MCF 10A (cell line): ENCODE measurements at regions of chr9 and their contacts with region 1.

Region 1: GRCh38 chr9:87382902-87383301 is 114.8 kb upstream of the DAPK1 start:
- DNase-seq: peak; percentile 87
- H3K4me3 Mint-ChIP-seq: peak overlapping the region; percentile 32
- H3K27ac Mint-ChIP-seq: peak overlapping the region; percentile 92
- H3K4me1 Mint-ChIP-seq: peaks cover 58% of the 10 kb centered on the region
- H3K27me3 Mint-ChIP-seq: no peaks in the 10 kb centered on the region
- CTCF ChIP-seq: no peak

Region 2: GRCh38 chr9:86854898-86855523 is 527.9 kb before region 1 on chr9:
- CTCF ChIA-PET with region 1: no interaction called
- POLR2A ChIA-PET with region 1: no interaction called
- intact Hi-C with region 1: no loop called
- DNase-seq: peak; percentile 60
- H3K4me3 Mint-ChIP-seq: no peak overlapping the region
- H3K27ac Mint-ChIP-seq: no peak overlapping the region
- H3K4me1 Mint-ChIP-seq: no peaks in the 10 kb centered on the region
- H3K27me3 Mint-ChIP-seq: no peaks in the 10 kb centered on the region
- CTCF ChIP-seq: no peak

Region 3: DNA sequence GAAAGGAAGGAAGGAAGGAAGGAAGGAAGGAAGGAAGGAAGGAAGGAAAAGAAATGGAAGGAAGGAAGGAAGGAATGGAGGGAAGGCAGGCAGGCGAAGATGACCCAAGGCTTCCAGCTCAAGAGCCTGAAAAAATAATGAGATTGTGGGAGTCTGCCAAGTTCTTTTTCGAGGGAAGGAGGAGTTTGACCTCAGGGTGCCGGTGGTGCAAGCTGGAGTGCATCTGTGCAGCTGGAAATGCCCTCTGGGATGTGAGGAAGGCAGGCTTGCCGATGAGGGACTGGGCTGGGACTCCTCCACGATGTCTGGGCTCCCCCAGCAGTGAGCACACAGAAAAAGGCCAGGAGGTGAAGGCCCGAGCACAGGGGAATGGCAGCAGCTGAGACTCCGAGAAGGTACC is 40.2 kb before region 1 on chr9:
- CTCF ChIA-PET with region 1: interaction called, 3 read pairs
- POLR2A ChIA-PET with region 1: interaction called, 79 read pairs
- intact Hi-C with region 1: no loop called
- DNase-seq: peak; percentile 54
- H3K4me3 Mint-ChIP-seq: peak overlapping the region; percentile 35
- H3K27ac Mint-ChIP-seq: no peak overlapping the region
- H3K4me1 Mint-ChIP-seq: peaks cover 37% of the 10 kb centered on the region
- H3K27me3 Mint-ChIP-seq: no peaks in the 10 kb centered on the region
- CTCF ChIP-seq: no peak

Region 4: DNA sequence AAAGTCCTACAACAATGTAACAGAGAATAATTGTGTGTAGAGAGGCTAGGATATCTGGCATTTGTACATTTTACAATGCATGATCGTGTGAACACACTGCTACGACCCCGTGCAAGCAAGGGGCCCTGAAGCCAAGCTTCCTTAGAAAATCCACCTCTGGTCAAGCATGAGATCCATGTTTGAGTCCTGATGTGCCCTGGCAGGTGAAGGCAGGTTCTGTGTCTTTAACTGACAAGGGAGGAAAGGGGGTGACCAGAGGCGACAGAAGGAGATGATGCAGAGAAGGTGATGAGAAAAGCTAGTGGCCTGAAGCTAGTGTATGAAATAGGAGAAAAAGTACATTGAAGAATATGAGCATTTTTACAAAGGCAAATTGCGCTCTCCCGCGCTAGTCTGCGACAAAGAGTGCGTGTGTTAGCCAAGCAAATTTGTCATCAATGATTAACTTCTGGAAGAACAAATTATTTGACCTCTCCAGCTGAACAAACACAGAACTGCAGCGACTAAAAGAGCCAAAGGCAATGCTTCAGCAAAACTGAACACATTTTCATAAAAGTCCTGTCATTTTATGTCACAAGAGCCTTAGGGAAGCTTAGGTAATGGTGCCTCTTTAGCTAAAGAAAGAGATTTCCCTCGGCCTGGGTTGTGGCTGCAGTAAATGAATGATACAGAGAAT is 13.0 kb after region 1 on chr9:
- CTCF ChIA-PET with region 1: interaction called, 4 read pairs
- POLR2A ChIA-PET with region 1: interaction called, 13 read pairs
- intact Hi-C with region 1: no loop called
- DNase-seq: no peak
- H3K4me3 Mint-ChIP-seq: no peak overlapping the region
- H3K27ac Mint-ChIP-seq: no peak overlapping the region
- H3K4me1 Mint-ChIP-seq: peaks cover 9% of the 10 kb centered on the region
- H3K27me3 Mint-ChIP-seq: no peaks in the 10 kb centered on the region
- CTCF ChIP-seq: no peak

Region 5: GRCh38 chr9:87405677-87406542 is 23.0 kb after region 1 on chr9:
- CTCF ChIA-PET with region 1: no interaction called
- POLR2A ChIA-PET with region 1: interaction called, 16 read pairs
- intact Hi-C with region 1: no loop called
- DNase-seq: peak; percentile 81
- H3K4me3 Mint-ChIP-seq: no peak overlapping the region
- H3K27ac Mint-ChIP-seq: peak overlapping the region; percentile 81
- H3K4me1 Mint-ChIP-seq: peaks cover 35% of the 10 kb centered on the region
- H3K27me3 Mint-ChIP-seq: no peaks in the 10 kb centered on the region
- CTCF ChIP-seq: no peak

Region 6: DNA sequence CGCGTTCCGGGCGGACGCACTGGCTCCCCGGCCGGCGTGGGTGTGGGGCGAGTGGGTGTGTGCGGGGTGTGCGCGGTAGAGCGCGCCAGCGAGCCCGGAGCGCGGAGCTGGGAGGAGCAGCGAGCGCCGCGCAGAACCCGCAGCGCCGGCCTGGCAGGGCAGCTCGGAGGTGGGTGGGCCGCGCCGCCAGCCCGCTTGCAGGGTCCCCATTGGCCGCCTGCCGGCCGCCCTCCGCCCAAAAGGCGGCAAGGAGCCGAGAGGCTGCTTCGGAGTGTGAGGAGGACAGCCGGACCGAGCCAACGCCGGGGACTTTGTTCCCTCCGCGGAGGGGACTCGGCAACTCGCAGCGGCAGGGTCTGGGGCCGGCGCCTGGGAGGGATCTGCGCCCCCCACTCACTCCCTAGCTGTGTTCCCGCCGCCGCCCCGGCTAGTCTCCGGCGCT is 114.7 kb after region 1 on chr9 and contains the start of gene DAPK1:
- CTCF ChIA-PET with region 1: interaction called, 3 read pairs
- POLR2A ChIA-PET with region 1: interaction called, 11 read pairs
- intact Hi-C with region 1: no loop called
- DNase-seq: peak; percentile 12
- H3K4me3 Mint-ChIP-seq: peak within 1 kb of the TSS; percentile 73
- H3K27ac Mint-ChIP-seq: peak within 1 kb of the TSS; percentile 12
- H3K4me1 Mint-ChIP-seq: peaks cover 17% of the 10 kb centered on the region
- H3K27me3 Mint-ChIP-seq: no peaks in the 10 kb centered on the region
- CTCF ChIP-seq: no peak
- total RNA-seq, gene DAPK1: 19.7 and 35.7 TPM in 2 replicates

Region 7: GRCh38 chr9:87883990-87884389 is 501.1 kb after region 1 on chr9:
- CTCF ChIA-PET with region 1: no interaction called
- POLR2A ChIA-PET with region 1: no interaction called
- intact Hi-C with region 1: no loop called
- DNase-seq: no peak
- H3K4me3 Mint-ChIP-seq: no peak overlapping the region
- H3K27ac Mint-ChIP-seq: no peak overlapping the region
- H3K4me1 Mint-ChIP-seq: no peaks in the 10 kb centered on the region
- H3K27me3 Mint-ChIP-seq: no peaks in the 10 kb centered on the region
- CTCF ChIP-seq: peak; percentile 11